ENCODE measurements at regions of chr9 and their contacts with region 1.

Region 1: GRCh38 chr9:35882263-35882848 is 12.2 kb upstream of the OR13J1 start:
- DNase-seq: peak; percentile 93
- ATAC-seq: peak; percentile 83

Region 2: GRCh38 chr9:35538361-35539234 is 343.8 kb before region 1 on chr9:
- intact Hi-C with region 1: no loop called
- DNase-seq: peak; percentile 82
- ATAC-seq: peak; percentile 86

Region 3: DNA sequence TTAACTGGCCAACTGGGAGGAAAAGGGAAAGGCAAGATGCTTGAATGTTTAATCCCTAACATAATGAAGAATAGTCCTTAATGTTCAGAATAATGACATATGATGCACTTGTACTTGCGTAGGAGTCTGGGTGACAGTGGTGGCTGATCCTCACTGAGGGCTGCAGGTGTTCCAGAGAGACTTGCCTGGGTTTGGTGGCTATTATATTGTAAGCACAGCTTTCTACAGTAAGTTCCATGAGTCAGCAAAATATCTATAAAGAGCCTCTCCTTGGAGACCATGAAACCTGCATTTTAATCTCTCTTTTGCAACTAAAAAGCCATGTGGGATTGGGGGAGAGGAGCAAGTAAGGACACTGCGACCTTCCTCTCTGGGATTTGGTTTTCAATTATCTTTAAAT is 92.8 kb before region 1 on chr9:
- intact Hi-C with region 1: loop called (anchors 2 kb)
- DNase-seq: no peak
- ATAC-seq: no peak

Region 4: GRCh38 chr9:35829084-35829763 is 53.1 kb before region 1 on chr9 and contains the start of gene TMEM8B:
- intact Hi-C with region 1: loop called (anchors 5 kb)
- DNase-seq: peak; percentile 99
- ATAC-seq: peak; percentile 90
- total RNA-seq, gene TMEM8B: 15.9 TPM

Measured in left ventricle myocardium superior (tissue), 1 donor.